ENCODE measurements at regions of chr12 and their contacts with region 1.

Region 1: DNA sequence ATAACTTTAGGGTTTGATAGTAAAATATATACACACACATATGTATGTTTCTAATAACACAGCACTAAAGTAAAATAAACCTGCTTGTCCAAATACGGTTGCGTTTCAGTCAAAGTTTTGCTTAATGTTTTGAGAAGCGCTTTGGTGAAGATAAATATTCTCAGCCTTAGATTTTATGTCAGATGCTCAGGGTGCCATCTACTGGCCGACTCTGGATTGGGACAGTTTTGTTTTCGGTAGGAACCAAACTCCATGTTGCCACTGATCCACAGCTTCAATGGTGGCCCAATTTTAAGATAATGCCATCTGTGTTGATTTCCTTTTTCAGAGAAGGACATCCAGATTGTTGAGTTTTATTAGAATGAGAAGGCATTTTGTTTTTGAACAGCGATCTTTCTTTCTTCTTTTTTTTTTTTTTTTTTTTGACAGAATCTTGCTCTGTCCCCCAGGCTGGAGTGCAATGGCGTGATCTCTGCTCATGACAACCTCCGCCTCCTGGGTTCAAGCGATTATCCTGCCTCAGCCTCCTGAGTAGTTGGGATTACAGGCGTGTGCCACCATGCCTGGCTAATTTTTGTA is 43.1 kb downstream of the LLPH start:
- DNase-seq: peak in 6 of 10 donors; percentile 48 to 87 (median 66)

Region 2: GRCh38 chr12:64890873-64891468 is 1196.5 kb before region 1 on chr12:
- intact Hi-C with region 1: loop called (anchors 10 kb)
- DNase-seq: no peak

Region 3: DNA sequence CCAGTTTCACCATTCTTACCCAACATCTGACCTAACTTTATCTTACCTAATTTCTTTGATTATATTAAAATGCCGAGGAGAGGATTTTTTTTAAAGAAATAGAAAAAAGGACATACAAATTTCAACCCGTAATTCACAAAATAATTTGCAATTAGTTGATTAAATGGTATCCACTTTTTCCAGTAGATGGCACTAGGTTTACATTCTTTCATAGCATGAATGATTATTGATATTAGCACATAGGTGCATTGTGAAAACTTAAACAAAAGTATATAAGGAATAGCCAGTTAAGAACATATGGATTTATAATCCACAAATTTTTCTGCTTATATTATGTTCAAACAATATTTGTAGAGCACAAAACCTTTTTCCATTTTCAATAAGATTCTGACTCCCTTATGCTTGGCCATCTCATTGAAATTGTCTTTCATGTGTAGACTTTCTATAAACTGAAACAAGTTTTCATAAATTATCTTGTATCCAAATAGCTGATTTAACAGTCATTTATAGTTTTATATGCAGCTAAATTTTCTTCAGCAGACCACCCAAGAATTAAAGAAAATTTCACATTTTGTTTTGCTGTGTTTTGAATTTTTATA is 773.6 kb before region 1 on chr12:
- intact Hi-C with region 1: loop called (anchors 10 kb)
- DNase-seq: no peak

Region 4: DNA sequence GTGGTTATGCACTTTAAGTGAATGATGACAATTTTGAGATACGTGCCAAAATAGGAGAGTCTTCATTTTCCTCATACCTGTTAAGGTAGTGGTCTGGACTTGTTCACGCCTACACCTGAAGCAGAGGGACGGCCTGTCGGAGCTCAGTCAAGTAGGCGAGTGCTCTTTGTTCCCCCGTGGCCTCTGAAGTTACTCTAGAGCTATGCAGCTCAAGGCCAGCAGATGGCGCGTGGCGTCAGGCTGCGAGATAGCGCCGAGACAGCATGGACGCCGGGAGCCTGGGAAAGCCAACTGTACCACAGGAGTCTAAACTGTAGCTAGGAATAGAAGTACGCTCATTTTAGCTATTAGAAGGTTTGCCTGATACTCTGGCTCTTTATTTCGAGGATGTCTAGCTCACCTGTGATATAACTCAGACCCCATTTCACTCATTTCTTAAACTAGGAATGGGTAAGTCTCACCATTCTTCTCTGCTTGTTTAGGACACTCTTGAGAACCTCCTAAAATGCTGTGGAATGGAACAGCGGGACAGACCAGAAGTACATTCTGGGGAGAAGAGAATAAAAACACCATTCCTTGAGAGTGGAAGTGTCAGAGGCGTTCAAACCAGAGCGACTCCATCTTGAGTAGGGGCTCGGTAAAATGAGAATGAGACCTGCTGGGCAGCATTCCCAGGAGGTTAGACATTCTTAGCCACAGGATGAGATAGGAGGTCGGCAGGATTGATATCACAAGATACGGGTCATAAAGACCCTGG is 530.6 kb before region 1 on chr12:
- intact Hi-C with region 1: loop called (anchors 1 kb)
- DNase-seq: peak; percentile 32 to 95 (median 73)

Region 5: DNA sequence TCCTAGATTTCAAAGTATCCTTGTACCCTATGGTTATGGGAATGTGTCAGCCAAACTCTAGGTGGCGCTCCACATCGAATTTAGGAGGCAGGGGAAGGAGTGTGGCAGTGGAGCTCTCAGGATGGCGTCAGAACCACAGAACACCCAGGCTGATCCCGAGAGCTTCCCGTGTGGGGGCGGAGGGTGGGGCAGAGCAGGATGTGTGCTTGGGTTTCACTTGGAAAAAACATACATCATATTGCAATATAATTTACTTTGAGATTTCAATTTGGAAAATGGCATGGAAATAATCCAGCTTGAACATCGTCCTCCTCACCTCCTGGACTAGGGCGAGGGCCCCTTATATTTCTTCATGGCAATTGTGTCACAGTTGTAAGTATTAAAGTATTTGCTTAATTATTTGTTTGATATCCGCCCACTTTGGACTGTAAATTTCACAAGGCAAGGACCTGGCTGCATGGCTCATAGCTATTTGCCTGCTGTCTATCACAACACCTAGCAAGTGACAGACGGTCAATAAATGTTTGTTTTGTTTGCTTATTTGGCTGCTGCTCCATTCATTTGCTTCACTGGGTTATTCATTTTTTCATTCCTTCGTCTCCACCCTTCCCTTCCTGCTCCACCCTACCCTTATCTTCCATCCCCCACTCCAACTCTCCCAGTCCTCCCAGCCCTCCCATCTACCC is 484.7 kb before region 1 on chr12:
- intact Hi-C with region 1: loop called (anchors 5 kb)
- DNase-seq: peak; percentile 22 to 92 (median 66)

Region 6: GRCh38 chr12:65996146-65996545 is 91.3 kb before region 1 on chr12:
- intact Hi-C with region 1: no loop called
- DNase-seq: no peak

Measured in posterior cingulate gyrus (tissue), 11 donors.